PC-3 (cell line): ENCODE measurements at regions of chr2 and their contacts with region 1.

Region 1: DNA sequence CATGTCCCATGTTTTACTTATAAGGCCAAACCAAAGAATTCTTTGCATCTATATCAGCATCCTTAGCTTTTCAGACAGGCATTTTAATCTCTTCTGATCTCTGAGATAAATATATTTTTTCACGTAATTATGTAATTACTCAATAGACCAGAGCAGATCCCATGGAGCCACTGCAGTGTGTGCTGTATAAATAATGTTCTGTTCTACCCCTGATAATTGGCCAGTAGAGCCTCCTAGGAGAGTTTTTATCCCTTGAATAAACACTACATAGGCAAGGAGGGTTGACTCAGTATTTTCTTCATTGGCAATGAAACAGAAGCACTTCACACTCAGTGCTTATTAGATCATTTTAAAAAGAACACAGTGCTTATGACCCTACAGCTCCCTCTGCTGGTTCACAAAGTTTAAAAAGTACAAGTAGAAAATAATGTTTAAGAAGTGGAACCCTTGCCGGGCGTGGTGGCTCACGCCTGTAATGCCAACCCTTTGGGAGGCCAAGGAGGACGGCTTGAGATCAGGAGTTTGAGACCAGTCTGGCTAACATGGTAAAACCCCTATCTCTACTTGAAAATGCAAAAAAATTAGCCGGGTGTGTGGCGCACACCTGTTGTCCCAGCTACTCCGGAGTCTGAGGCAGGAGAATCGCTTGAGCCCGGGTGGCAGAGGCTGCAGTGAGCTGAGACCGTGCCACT is 91.9 kb downstream of the PPP1R1C start:
- DNase-seq: peak; percentile 95
- ATAC-seq: peak; percentile 82
- H3K4me3 ChIP-seq: peak overlapping the region; percentile 35; the same call in 1 of the 2 replicates
- H3K27ac ChIP-seq: peak overlapping the region; percentile 78
- H3K4me1 ChIP-seq: peaks cover 47% of the 10 kb centered on the region
- H3K27me3 ChIP-seq: no peaks in the 10 kb centered on the region
- CTCF ChIP-seq: peak; percentile 85

Region 2: GRCh38 chr2:181178823-181179412 is 898.7 kb before region 1 on chr2:
- CTCF ChIA-PET with region 1: no interaction called
- POLR2A ChIA-PET with region 1: no interaction called
- intact Hi-C with region 1: no loop called
- DNase-seq: peak; percentile 45
- ATAC-seq: no peak
- H3K4me3 ChIP-seq: no peak overlapping the region
- H3K27ac ChIP-seq: no peak overlapping the region
- H3K4me1 ChIP-seq: peaks cover 29% of the 10 kb centered on the region
- H3K27me3 ChIP-seq: no peaks in the 10 kb centered on the region
- CTCF ChIP-seq: peak; percentile 65

Region 3: DNA sequence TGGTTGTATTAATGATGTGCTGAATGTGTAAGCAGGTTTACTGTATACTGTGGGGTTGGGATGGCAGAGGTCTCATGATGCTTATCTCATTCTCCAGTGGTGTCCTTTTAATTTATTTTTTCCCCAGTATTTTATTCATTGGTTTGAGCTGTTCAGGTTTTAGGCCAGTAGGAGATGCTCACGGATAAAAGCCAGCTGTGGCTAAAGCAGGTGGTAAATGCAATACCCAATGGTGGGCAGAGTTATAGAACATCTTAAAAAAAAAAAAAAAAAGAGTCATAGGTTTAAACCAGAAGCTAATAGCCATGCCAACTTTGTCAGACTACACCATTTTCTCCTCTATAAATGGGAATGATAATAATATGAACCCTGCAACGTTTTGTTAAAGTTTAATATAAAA is 339.5 kb before region 1 on chr2:
- CTCF ChIA-PET with region 1: interaction called, 3 read pairs
- POLR2A ChIA-PET with region 1: no interaction called
- intact Hi-C with region 1: loop called (anchors 1 kb)
- DNase-seq: peak; percentile 58
- ATAC-seq: peak; percentile 65
- H3K4me3 ChIP-seq: no peak overlapping the region
- H3K27ac ChIP-seq: no peak overlapping the region
- H3K4me1 ChIP-seq: peaks cover 20% of the 10 kb centered on the region
- H3K27me3 ChIP-seq: no peaks in the 10 kb centered on the region
- CTCF ChIP-seq: peak; percentile 58

Region 4: DNA sequence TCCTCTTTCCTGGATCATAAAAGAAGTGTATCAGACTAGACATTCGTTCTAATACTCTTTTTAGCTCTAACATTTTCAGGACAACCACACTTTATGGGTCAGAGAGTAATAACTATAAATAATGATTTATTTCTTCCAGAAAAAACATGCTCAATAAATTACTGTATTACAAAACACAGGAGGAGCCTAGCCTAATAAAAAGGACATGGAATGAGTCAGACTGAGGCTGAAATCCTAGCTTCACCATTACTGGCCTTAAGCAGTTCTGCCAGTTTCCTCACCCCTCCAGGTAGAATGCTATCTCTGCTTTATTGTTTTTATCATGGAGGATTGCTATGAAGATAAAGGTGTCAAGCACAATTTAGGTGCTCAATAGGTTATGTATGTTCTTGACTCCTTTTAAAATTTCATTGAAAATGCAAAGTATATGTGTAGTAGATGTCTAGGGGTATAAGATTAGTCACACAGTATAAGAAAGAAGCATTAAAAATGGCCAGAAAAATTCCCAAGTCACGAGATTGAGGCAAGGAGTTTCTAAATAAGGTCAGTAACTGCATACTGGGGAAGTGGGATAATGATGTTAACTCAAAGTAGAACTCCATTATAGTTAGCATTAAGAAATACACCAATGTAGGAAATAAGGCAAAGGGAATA is 291.8 kb before region 1 on chr2:
- CTCF ChIA-PET with region 1: no interaction called
- POLR2A ChIA-PET with region 1: no interaction called
- intact Hi-C with region 1: loop called (anchors 5 kb)
- DNase-seq: peak; percentile 90
- ATAC-seq: peak; percentile 93
- H3K4me3 ChIP-seq: peak overlapping the region; percentile 0; the same call in 1 of the 2 replicates
- H3K27ac ChIP-seq: peak overlapping the region; percentile 83
- H3K4me1 ChIP-seq: peaks cover 74% of the 10 kb centered on the region
- H3K27me3 ChIP-seq: no peaks in the 10 kb centered on the region
- CTCF ChIP-seq: no peak

Region 5: DNA sequence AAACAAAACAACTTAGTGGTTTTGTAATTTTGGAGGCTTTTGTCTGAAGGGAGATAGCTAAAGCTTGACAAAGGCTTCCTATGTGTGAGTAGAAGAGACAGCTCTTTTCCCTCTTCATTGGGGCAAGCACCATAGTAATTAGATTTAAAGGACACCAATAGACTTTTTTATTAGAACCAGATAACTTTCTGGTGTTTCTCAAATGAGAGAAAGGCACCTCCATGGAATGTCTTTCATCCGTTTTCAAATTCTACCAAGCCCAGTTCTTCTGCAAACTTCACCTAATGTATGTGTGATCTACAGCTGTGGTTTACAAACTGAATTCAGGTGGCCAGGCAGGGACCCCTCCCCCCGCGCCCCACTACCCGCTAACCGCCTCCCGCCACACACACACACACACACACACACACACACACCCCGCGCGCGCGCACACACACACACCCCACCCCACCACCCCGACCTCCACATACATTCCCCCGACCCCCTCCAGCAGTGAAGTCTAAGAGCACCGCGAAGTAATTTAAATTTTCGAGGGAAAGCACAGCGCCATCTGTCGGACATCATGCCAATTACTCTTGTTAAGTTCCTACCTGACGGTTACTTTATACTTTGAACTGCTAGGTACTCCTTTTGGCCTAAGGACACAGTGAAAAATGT is 123.6 kb before region 1 on chr2:
- CTCF ChIA-PET with region 1: no interaction called
- POLR2A ChIA-PET with region 1: no interaction called
- intact Hi-C with region 1: loop called (anchors 2 kb)
- DNase-seq: peak; percentile 83
- ATAC-seq: peak; percentile 42
- H3K4me3 ChIP-seq: peak overlapping the region; percentile 45
- H3K27ac ChIP-seq: peak overlapping the region; percentile 57
- H3K4me1 ChIP-seq: peaks cover 35% of the 10 kb centered on the region
- H3K27me3 ChIP-seq: no peaks in the 10 kb centered on the region
- CTCF ChIP-seq: peak; percentile 79

Region 6: GRCh38 chr2:182650704-182651103 is 573.1 kb after region 1 on chr2:
- CTCF ChIA-PET with region 1: no interaction called
- POLR2A ChIA-PET with region 1: no interaction called
- intact Hi-C with region 1: loop called (anchors 5 kb)
- DNase-seq: peak; percentile 61
- ATAC-seq: no peak
- H3K4me3 ChIP-seq: 0 out of 2 replicates have a peak overlapping the region, but pooled peaks have one; percentile 24
- H3K27ac ChIP-seq: no peak overlapping the region
- H3K4me1 ChIP-seq: no peaks in the 10 kb centered on the region
- H3K27me3 ChIP-seq: no peaks in the 10 kb centered on the region
- CTCF ChIP-seq: peak; percentile 62